MCF 10A (cell line): ENCODE measurements at regions of chr2 and their contacts with region 1.

Region 1: GRCh38 chr2:215269397-215270119 is 42.3 kb upstream of the ATIC start:
- DNase-seq: peak; percentile 87
- H3K4me3 Mint-ChIP-seq: no peak overlapping the region
- H3K27ac Mint-ChIP-seq: peak overlapping the region; percentile 49
- H3K4me1 Mint-ChIP-seq: no peaks in the 10 kb centered on the region
- H3K27me3 Mint-ChIP-seq: no peaks in the 10 kb centered on the region
- CTCF ChIP-seq: peak; percentile 74

Region 2: GRCh38 chr2:214960677-214961076 is 308.9 kb before region 1 on chr2:
- CTCF ChIA-PET with region 1: interaction called, 13 read pairs
- POLR2A ChIA-PET with region 1: no interaction called
- intact Hi-C with region 1: loop called (anchors 1 kb)
- DNase-seq: peak; percentile 13
- H3K4me3 Mint-ChIP-seq: no peak overlapping the region
- H3K27ac Mint-ChIP-seq: no peak overlapping the region
- H3K4me1 Mint-ChIP-seq: no peaks in the 10 kb centered on the region
- H3K27me3 Mint-ChIP-seq: no peaks in the 10 kb centered on the region
- CTCF ChIP-seq: peak; percentile 24

Region 3: GRCh38 chr2:215105608-215106354 is 163.8 kb before region 1 on chr2:
- CTCF ChIA-PET with region 1: interaction called, 4 read pairs
- POLR2A ChIA-PET with region 1: interaction called, 7 read pairs
- intact Hi-C with region 1: loop called (anchors 5 kb)
- DNase-seq: peak; percentile 93
- H3K4me3 Mint-ChIP-seq: peak overlapping the region; percentile 30
- H3K27ac Mint-ChIP-seq: peak overlapping the region; percentile 84
- H3K4me1 Mint-ChIP-seq: peaks cover 41% of the 10 kb centered on the region
- H3K27me3 Mint-ChIP-seq: no peaks in the 10 kb centered on the region
- CTCF ChIP-seq: no peak

Region 4: GRCh38 chr2:215241791-215242305 is 27.7 kb before region 1 on chr2:
- CTCF ChIA-PET with region 1: interaction called, 11 read pairs
- POLR2A ChIA-PET with region 1: no interaction called
- intact Hi-C with region 1: no loop called
- DNase-seq: no peak
- H3K4me3 Mint-ChIP-seq: no peak overlapping the region
- H3K27ac Mint-ChIP-seq: no peak overlapping the region
- H3K4me1 Mint-ChIP-seq: peaks cover 11% of the 10 kb centered on the region
- H3K27me3 Mint-ChIP-seq: no peaks in the 10 kb centered on the region
- CTCF ChIP-seq: no peak

Region 5: DNA sequence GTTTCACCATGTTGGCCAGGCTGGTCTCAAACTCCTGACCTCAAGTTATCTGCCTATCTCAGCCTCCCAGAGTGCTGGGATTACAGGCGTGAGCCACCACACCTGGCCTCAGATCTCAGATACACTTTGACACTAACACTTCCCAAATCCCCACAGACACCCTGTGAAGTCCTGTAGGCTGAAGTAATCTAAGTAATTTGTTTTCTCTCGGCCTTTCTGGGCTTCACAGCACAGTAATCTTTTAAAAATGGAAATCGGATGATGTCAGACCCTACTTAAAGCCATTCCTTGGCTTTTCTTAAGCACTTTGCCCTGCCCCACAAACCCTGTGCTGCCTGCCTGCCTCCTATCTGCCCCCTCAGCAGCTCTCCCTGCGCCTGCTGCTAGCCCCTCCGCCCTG is 58.5 kb after region 1 on chr2:
- CTCF ChIA-PET with region 1: no interaction called
- POLR2A ChIA-PET with region 1: no interaction called
- intact Hi-C with region 1: no loop called
- DNase-seq: no peak
- H3K4me3 Mint-ChIP-seq: no peak overlapping the region
- H3K27ac Mint-ChIP-seq: peak overlapping the region; percentile 5
- H3K4me1 Mint-ChIP-seq: no peaks in the 10 kb centered on the region
- H3K27me3 Mint-ChIP-seq: no peaks in the 10 kb centered on the region
- CTCF ChIP-seq: no peak

Region 6: DNA sequence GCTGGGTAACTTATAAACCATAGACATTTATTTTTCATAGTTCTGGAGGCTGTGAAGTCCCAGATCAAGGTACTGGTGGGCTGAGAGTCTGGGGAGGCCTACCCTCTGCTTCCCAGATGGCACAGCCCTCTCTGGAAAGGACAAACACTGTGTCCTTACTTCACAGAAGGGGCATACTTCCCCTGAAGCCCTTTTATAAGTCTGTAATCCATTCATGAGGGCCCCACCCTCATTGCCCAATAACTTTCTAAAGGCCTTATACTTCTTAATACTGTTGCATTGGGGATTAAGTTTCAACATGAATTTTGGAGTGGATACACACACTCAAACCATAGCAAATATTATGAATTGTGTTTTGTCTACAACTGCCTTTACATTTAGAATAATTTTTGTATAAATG is 78.3 kb after region 1 on chr2:
- CTCF ChIA-PET with region 1: no interaction called
- POLR2A ChIA-PET with region 1: no interaction called
- intact Hi-C with region 1: no loop called
- DNase-seq: no peak
- H3K4me3 Mint-ChIP-seq: no peak overlapping the region
- H3K27ac Mint-ChIP-seq: no peak overlapping the region
- H3K4me1 Mint-ChIP-seq: no peaks in the 10 kb centered on the region
- H3K27me3 Mint-ChIP-seq: no peaks in the 10 kb centered on the region
- CTCF ChIP-seq: no peak

Region 7: GRCh38 chr2:215553946-215554345 is 284.4 kb after region 1 on chr2:
- CTCF ChIA-PET with region 1: no interaction called
- POLR2A ChIA-PET with region 1: no interaction called
- intact Hi-C with region 1: no loop called
- DNase-seq: no peak
- H3K4me3 Mint-ChIP-seq: no peak overlapping the region
- H3K27ac Mint-ChIP-seq: no peak overlapping the region
- H3K4me1 Mint-ChIP-seq: peaks cover 26% of the 10 kb centered on the region
- H3K27me3 Mint-ChIP-seq: no peaks in the 10 kb centered on the region
- CTCF ChIP-seq: no peak

Region 8: GRCh38 chr2:215711471-215712034 is 442.0 kb after region 1 on chr2:
- CTCF ChIA-PET with region 1: no interaction called
- POLR2A ChIA-PET with region 1: no interaction called
- intact Hi-C with region 1: no loop called
- DNase-seq: peak; percentile 46
- H3K4me3 Mint-ChIP-seq: no peak overlapping the region
- H3K27ac Mint-ChIP-seq: no peak overlapping the region
- H3K4me1 Mint-ChIP-seq: peaks cover 16% of the 10 kb centered on the region
- H3K27me3 Mint-ChIP-seq: no peaks in the 10 kb centered on the region
- CTCF ChIP-seq: no peak